Activated CD4-positive, alpha-beta T cell treated with anti-CD3 and anti-CD28 coated beads, Interleukin-2, amount 10 ng/mL, durations not matched to agents 24 days and 14 days (primary cell): ENCODE measurements at regions of chr17 and their contacts with region 1.

Region 1: GRCh38 chr17:1724506-1725362 is at the start of gene WDR81:
- DNase-seq: peak; percentile 96
- H3K4me3 Mint-ChIP-seq: peak within 1 kb of the TSS; percentile 82
- H3K27ac Mint-ChIP-seq: peak within 1 kb of the TSS; percentile 83
- H3K4me1 Mint-ChIP-seq: peaks cover 29% of the 10 kb centered on the region
- H3K27me3 Mint-ChIP-seq: no peaks in the 10 kb centered on the region
- total RNA-seq, gene WDR81: 17.6 and 18.3 TPM in 2 replicates

Region 2: GRCh38 chr17:1764284-1764683 is 39.5 kb after region 1 on chr17:
- intact Hi-C with region 1: loop called (anchors 5 kb)
- DNase-seq: peak; percentile 94
- H3K4me3 Mint-ChIP-seq: peak overlapping the region; percentile 61
- H3K27ac Mint-ChIP-seq: peak overlapping the region; percentile 79
- H3K4me1 Mint-ChIP-seq: peaks cover 23% of the 10 kb centered on the region
- H3K27me3 Mint-ChIP-seq: no peaks in the 10 kb centered on the region

Region 3: GRCh38 chr17:1783834-1784611 is 59.3 kb after region 1 on chr17:
- intact Hi-C with region 1: loop called (anchors 5 kb)
- DNase-seq: peak; percentile 66
- H3K4me3 Mint-ChIP-seq: no peak overlapping the region
- H3K27ac Mint-ChIP-seq: peak overlapping the region; percentile 71
- H3K4me1 Mint-ChIP-seq: peaks cover 7% of the 10 kb centered on the region
- H3K27me3 Mint-ChIP-seq: no peaks in the 10 kb centered on the region